Endothelial cell of umbilical vein (primary cell): ENCODE measurements at regions of chr6 and their contacts with region 1.

Region 1: GRCh38 chr6:105402939-105403935 is at the start of gene PREP:
- DNase-seq: peak; percentile 85
- H3K4me3 ChIP-seq: peak within 1 kb of the TSS; percentile 81 to 97 (median 84)
- H3K27ac ChIP-seq: peak within 1 kb of the TSS; percentile 62
- H3K4me1 ChIP-seq: peaks cover 6% of the 10 kb centered on the region
- H3K27me3 ChIP-seq: no peaks in the 10 kb centered on the region
- CTCF ChIP-seq: peak; percentile 68 to 74
- POLR2A ChIP-seq: peak; percentile 64
- total RNA-seq, gene PREP: 37.7 and 40.7 TPM in 2 replicates

Region 2: GRCh38 chr6:104995989-104996617 is 407.1 kb before region 1 on chr6:
- CTCF ChIA-PET with region 1: interaction called, 5 read pairs
- POLR2A ChIA-PET with region 1: no interaction called
- dilution Hi-C with region 1: no loop called
- intact Hi-C with region 1: loop called (anchors 5 kb)
- DNase-seq: peak; percentile 72
- H3K4me3 ChIP-seq: no peak overlapping the region
- H3K27ac ChIP-seq: no peak overlapping the region
- H3K4me1 ChIP-seq: no peaks in the 10 kb centered on the region
- H3K27me3 ChIP-seq: no peaks in the 10 kb centered on the region
- CTCF ChIP-seq: peak in 1 of 2 donors; percentile 14
- POLR2A ChIP-seq: no peak

Region 3: DNA sequence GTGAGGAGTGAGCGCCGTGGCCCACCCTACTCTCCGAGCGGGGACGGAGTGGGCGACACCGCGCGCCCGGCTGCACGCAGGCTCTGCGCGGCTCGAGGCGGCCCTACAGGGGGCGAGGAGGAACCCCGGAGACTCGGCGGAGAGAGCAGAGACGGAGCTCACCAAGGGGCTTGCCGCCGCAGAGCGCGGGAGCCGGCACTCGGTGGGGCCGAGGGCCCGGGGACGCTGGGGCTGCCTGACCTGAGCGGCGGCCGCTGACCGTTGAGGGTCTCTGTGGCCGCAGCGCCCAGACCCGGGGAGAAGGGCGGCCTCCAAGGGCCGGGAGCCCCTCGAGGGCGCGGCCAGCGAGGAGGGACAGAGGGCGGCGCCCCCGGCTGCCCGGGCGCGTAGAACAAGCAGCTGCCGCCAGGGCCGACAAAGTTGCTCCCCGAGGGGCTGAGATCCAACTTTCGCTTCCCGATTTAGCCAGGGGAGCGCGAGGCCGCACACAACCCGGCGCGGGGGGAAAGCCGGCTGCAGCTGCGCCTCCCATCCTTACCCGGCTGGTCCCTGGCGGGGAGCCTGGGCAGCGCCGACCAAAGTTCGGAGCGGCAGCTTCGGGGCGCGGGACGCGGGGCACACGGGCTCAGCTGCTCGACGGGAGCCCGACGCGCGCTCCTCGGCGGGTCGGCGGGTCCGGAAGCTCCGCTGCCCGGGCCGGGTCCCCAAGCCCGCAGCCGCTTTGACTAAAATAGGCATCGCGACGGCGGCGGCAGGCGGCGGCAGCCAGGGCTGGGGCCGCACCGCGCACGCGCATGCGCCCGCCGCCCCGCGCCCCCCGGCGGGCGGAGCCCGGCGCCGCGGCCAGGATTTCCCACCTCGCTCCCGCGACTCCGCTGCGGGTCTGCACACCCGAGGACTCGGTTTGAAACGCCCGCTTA is 266.5 kb before region 1 on chr6:
- CTCF ChIA-PET with region 1: interaction called, 23 read pairs
- POLR2A ChIA-PET with region 1: no interaction called
- dilution Hi-C with region 1: no loop called
- intact Hi-C with region 1: loop called (anchors 1 kb)
- DNase-seq: peak; percentile 55
- H3K4me3 ChIP-seq: peak overlapping the region; percentile 53 to 96 (median 76)
- H3K27ac ChIP-seq: peak overlapping the region; percentile 38
- H3K4me1 ChIP-seq: peaks cover 11% of the 10 kb centered on the region
- H3K27me3 ChIP-seq: no peaks in the 10 kb centered on the region
- CTCF ChIP-seq: peak in 1 of 2 donors; percentile 38
- POLR2A ChIP-seq: no peak

Region 4: GRCh38 chr6:105272786-105273185 is 130.5 kb before region 1 on chr6:
- CTCF ChIA-PET with region 1: interaction called, 5 read pairs
- POLR2A ChIA-PET with region 1: no interaction called
- dilution Hi-C with region 1: no loop called
- intact Hi-C with region 1: loop called (anchors 5 kb)
- DNase-seq: peak; percentile 24
- H3K4me3 ChIP-seq: no peak overlapping the region
- H3K27ac ChIP-seq: no peak overlapping the region
- H3K4me1 ChIP-seq: no peaks in the 10 kb centered on the region
- H3K27me3 ChIP-seq: no peaks in the 10 kb centered on the region
- CTCF ChIP-seq: no peak
- POLR2A ChIP-seq: no peak

Region 5: DNA sequence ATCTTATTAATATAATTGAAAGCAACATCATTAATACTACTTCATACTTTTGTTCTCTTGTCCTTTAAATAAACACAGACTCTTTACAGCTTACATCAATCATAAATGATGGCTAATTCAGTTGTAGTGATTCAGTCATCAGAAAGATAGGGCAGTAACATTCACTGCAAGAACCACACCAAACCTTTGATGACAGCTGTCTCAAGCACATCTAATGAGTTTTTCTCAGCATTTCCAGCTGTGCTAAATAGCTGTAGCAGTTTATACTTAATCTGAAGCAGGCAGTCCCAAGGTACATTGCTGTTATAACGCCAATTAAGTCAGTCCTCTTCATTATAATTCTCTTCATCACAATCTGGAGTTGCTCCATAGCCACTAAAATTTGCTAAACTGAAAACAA is 46.1 kb before region 1 on chr6:
- CTCF ChIA-PET with region 1: interaction called, 27 read pairs
- POLR2A ChIA-PET with region 1: no interaction called
- dilution Hi-C with region 1: no loop called
- intact Hi-C with region 1: loop called (anchors 1 kb)
- DNase-seq: no peak
- H3K4me3 ChIP-seq: no peak overlapping the region
- H3K27ac ChIP-seq: no peak overlapping the region
- H3K4me1 ChIP-seq: peaks cover 6% of the 10 kb centered on the region
- H3K27me3 ChIP-seq: no peaks in the 10 kb centered on the region
- CTCF ChIP-seq: no peak
- POLR2A ChIP-seq: no peak

Region 6: DNA sequence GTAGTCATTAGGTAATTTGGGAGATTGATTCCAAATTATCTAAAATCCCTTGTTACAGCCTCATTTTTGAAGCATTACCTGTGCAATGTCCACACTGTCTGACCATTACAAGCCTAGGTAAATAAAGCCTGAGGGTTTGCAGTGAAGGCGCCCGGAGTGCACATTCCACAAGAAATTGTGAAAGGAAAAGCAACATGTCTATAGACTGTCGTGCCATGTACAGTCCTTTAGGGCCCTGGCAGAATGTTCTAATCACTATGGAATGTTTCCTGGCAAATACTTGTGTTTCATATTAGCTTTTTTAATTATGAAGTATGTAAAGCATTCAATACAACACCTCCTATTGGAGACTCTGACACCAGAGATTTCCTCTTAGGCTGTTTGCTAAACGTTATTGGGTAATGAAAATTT is 29.2 kb before region 1 on chr6:
- CTCF ChIA-PET with region 1: interaction called, 25 read pairs
- POLR2A ChIA-PET with region 1: interaction called, 3 read pairs
- dilution Hi-C with region 1: no loop called
- intact Hi-C with region 1: loop called (anchors 1 kb)
- DNase-seq: peak; percentile 82
- H3K4me3 ChIP-seq: no peak overlapping the region
- H3K27ac ChIP-seq: peak overlapping the region; percentile 52
- H3K4me1 ChIP-seq: peaks cover 6% of the 10 kb centered on the region
- H3K27me3 ChIP-seq: no peaks in the 10 kb centered on the region
- CTCF ChIP-seq: no peak
- POLR2A ChIP-seq: no peak

Region 7: GRCh38 chr6:105388152-105388791 is 15.0 kb before region 1 on chr6:
- CTCF ChIA-PET with region 1: interaction called, 16 read pairs
- POLR2A ChIA-PET with region 1: no interaction called
- dilution Hi-C with region 1: no loop called
- intact Hi-C with region 1: loop called (anchors 2 kb)
- DNase-seq: no peak
- H3K4me3 ChIP-seq: no peak overlapping the region
- H3K27ac ChIP-seq: no peak overlapping the region
- H3K4me1 ChIP-seq: peaks cover 2% of the 10 kb centered on the region
- H3K27me3 ChIP-seq: no peaks in the 10 kb centered on the region
- CTCF ChIP-seq: no peak
- POLR2A ChIP-seq: no peak